Vagina (tissue), 2 donors: ENCODE measurements at regions of chr11 and their contacts with region 1.

Region 1: DNA sequence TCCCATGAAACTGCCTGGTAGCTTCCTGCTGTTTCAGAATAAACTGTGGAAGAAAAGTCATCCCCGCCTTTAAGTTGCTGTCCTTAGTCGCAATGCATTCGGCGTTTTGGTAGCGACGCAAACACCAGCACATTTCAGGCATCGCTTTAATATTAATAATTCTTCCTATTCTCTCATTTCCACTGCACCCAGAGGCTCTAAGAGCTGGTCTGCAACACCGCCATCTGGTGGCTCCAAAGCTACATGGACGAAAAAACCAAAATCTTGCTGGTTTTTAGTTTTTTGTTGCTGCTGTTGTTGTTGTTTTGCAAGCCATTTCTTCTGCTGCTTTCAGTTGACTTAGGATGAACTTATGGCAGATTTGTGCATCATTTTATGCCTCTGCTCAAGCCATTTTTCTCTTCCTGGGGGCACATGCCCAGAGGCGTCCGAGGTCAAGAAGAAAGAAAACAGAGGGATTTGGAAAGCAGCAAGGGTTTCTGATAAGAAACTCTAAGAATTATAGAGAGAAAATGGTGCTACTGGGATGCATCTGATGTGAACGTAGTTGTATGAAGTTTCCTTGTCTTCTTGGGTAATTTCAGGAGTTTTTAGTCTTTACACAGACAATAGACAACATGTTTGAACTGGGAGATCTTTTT is 345.4 kb upstream of the KIRREL3 start:
- DNase-seq: no peak
- H3K4me3 ChIP-seq: no peak overlapping the region
- H3K27ac ChIP-seq: no peak overlapping the region
- H3K4me1 ChIP-seq: no peaks in the 10 kb centered on the region
- H3K27me3 ChIP-seq: no peaks in the 10 kb centered on the region
- CTCF ChIP-seq: peak; percentile 11 to 41 (median 24)
- POLR2A ChIP-seq: no peak

Region 2: GRCh38 chr11:126440792-126441514 is 905.0 kb before region 1 on chr11:
- intact Hi-C with region 1: loop called (anchors 10 kb)
- DNase-seq: no peak
- H3K4me3 ChIP-seq: no peak overlapping the region
- H3K27ac ChIP-seq: no peak overlapping the region
- H3K4me1 ChIP-seq: peaks cover 7% of the 10 kb centered on the region
- H3K27me3 ChIP-seq: no peaks in the 10 kb centered on the region
- CTCF ChIP-seq: peak; percentile 83 to 98 (median 90)
- POLR2A ChIP-seq: no peak

Region 3: DNA sequence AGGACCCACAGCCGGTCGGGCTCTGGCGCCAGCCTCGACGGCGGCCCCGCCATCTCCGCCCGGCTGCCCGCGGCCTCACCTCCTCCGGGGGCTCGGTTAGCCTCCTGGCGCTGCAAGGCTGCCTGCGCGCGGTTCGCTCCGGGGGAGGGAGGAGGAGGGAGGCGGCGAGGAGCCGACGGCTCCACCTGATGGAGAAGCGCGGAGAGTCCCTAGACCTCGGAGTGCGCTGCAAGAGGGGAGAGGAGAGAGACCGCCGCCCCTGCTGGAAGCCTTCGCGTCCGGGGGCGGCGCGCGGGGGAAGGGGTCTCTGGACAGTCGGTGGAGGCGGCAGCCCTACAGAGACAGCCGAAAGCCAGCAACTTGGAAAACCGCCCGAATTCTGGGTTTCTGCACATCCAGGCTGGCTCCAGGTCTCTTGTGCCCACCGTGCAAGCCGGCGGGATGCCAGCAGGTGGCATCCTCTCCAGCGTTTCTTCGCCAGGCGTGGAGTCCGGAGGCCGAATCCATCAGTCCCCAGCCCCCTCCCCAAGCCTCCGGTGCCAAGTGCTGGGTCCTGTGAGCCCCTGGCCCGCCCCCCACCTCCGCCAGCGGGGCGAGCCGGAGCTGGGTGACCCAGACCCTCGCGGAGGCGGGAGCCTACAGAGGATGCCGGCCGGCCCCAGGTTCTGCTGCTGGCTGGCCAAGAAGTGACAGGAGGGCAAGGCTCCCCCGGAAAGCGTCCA is 342.5 kb before region 1 on chr11:
- intact Hi-C with region 1: no loop called
- DNase-seq: no peak
- H3K4me3 ChIP-seq: peak overlapping the region in 1 of 2 donors; percentile 8
- H3K27ac ChIP-seq: no peak overlapping the region
- H3K4me1 ChIP-seq: peaks cover 20% of the 10 kb centered on the region
- H3K27me3 ChIP-seq: peaks cover 12% of the 10 kb centered on the region
- CTCF ChIP-seq: no peak
- POLR2A ChIP-seq: no peak

Region 4: DNA sequence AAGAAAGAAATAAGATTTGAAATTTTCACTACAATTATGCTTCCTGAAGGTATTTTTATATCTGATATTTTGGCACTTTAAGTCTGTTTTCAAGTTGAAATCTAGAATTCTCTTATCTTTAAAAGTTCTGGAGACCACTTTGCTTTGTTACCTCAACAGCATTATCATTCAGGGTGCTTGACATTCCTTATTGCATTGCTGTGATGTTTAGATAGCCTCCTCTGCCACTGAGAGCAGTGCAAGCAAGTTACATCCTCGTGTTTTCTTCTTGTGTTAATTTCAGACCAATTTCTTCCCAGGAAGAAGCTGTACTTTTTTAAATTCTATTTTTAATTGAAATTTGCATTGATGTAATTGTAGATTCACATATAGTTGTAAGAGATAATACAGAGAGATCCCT is 11.5 kb before region 1 on chr11:
- intact Hi-C with region 1: loop called (anchors 1 kb)
- DNase-seq: no peak
- H3K4me3 ChIP-seq: no peak overlapping the region
- H3K27ac ChIP-seq: no peak overlapping the region
- H3K4me1 ChIP-seq: no peaks in the 10 kb centered on the region
- H3K27me3 ChIP-seq: no peaks in the 10 kb centered on the region
- CTCF ChIP-seq: no peak
- POLR2A ChIP-seq: no peak

Region 5: GRCh38 chr11:127425281-127425680 is 79.3 kb after region 1 on chr11:
- intact Hi-C with region 1: no loop called
- DNase-seq: no peak
- H3K4me3 ChIP-seq: no peak overlapping the region
- H3K27ac ChIP-seq: no peak overlapping the region
- H3K4me1 ChIP-seq: no peaks in the 10 kb centered on the region
- H3K27me3 ChIP-seq: no peaks in the 10 kb centered on the region
- CTCF ChIP-seq: no peak
- POLR2A ChIP-seq: no peak